SK-N-SH (cell line): ENCODE measurements at regions of chr14 and their contacts with region 1.

Region 1: GRCh38 chr14:73825551-73826188 is 26.0 kb upstream of the PTGR2 start:
- DNase-seq: peak; percentile 90
- H3K4me3 ChIP-seq: peak overlapping the region in 1 of 2 experiments; percentile 27; a peak in 1 of 4 replicates
- H3K27ac ChIP-seq: no peak overlapping the region; a peak in 1 of 4 replicates
- H3K4me1 ChIP-seq: peaks cover 0 to 3% of the 10 kb centered on the region in 2 experiments; a peak in 1 of 4 replicates
- H3K27me3 ChIP-seq: no peaks in the 10 kb centered on the region
- CTCF ChIP-seq: peak; percentile 93
- EP300 ChIP-seq: no peak
- RAD21 ChIP-seq: peak; percentile 94

Region 2: GRCh38 chr14:73746520-73747378 is 78.9 kb before region 1 on chr14:
- CTCF ChIA-PET with region 1: interaction called, 26 read pairs
- POLR2A ChIA-PET with region 1: no interaction called
- DNase-seq: peak; percentile 70
- H3K4me3 ChIP-seq: no peak overlapping the region
- H3K27ac ChIP-seq: peak overlapping the region in 1 of 2 experiments; percentile 51; a peak in 2 of 4 replicates
- H3K4me1 ChIP-seq: peaks cover 29 to 66% of the 10 kb centered on the region in 2 experiments; a peak in 3 of 4 replicates
- H3K27me3 ChIP-seq: no peaks in the 10 kb centered on the region
- CTCF ChIP-seq: peak; percentile 19
- EP300 ChIP-seq: no peak
- RAD21 ChIP-seq: peak; percentile 64

Region 3: GRCh38 chr14:73753959-73754882 is 71.4 kb before region 1 on chr14:
- CTCF ChIA-PET with region 1: interaction called, 25 read pairs
- POLR2A ChIA-PET with region 1: no interaction called
- DNase-seq: no peak
- H3K4me3 ChIP-seq: no peak overlapping the region
- H3K27ac ChIP-seq: peak overlapping the region in 1 of 2 experiments; percentile 75; a peak in 2 of 4 replicates
- H3K4me1 ChIP-seq: peaks cover 61 to 76% of the 10 kb centered on the region in 2 experiments
- H3K27me3 ChIP-seq: no peaks in the 10 kb centered on the region
- CTCF ChIP-seq: no peak
- EP300 ChIP-seq: no peak
- RAD21 ChIP-seq: no peak